Activated CD4-positive, alpha-beta T cell treated with anti-CD3 and anti-CD28 coated beads for 36 hours (primary cell): ENCODE measurements at regions of chr5 and their contacts with region 1.

Region 1: DNA sequence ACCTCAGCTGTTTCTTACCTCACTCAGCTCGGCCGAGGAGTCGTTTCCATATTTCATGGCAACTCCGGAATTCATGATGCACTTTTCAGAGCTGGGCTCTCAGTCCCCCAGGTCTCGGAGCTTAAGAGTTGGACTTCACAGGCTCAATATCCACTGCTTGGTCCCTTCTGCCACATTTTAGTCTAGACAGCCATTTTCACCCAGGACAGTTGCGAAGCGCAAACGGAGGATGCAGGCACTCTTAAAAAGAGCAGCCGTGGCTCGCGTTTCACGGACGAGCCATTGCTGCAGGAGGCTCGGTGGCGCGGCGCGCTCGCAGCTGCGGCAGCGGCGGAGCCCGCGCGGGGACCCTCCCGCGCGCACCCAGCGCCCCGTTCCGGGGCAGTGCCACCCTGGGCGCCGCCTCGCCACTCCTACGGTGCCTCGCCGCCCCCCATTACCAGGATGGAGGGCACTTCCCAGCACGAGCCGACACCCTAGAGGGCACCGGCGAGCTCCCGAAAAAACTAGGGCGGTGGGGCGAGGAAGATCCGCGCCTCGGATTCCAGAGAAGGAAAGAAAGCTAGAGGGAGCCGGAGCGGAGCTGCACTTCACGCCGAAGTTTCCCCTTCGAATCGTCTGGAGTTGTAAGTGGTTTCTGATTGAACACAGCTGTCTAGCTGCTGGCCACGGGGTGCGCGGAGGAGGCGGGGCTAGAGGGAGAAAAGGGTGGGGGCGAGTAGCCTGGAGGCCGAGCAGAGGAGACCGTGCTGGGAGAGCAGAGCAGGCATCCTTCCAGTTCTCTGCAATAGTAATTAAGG is 140.3 kb downstream of the TSSK1B start:
- DNase-seq: peak; percentile 89
- ATAC-seq: peak; percentile 96
- H3K4me3 Mint-ChIP-seq: peak overlapping the region; percentile 78
- H3K27ac Mint-ChIP-seq: peak overlapping the region; percentile 61
- H3K4me1 Mint-ChIP-seq: peaks cover 15% of the 10 kb centered on the region
- H3K27me3 Mint-ChIP-seq: peaks cover 38% of the 10 kb centered on the region

Region 2: DNA sequence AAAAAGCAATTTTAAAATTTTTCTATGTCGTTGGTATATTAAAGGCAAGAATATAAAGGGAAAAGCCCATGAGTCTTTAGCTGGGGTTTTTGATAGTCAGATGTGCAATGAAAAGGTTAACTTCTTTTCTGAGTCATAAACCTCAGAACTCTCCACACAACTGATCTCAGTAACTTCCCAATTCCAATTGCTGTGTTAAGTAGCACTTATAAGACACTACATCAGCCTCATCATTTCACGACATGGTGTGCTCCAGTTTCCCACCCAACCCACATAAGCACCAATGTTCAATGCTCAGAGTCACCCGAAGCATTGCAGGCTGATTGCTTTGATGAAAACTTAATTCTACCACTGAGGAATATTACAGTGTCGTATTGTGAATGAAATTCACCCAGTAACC is 15.5 kb before region 1 on chr5:
- CTCF ChIA-PET with region 1: interaction called, 15 read pairs
- POLR2A ChIA-PET with region 1: no interaction called
- intact Hi-C with region 1: no loop called
- DNase-seq: peak; percentile 34
- ATAC-seq: peak; percentile 93
- H3K4me3 Mint-ChIP-seq: no peak overlapping the region
- H3K27ac Mint-ChIP-seq: no peak overlapping the region
- H3K4me1 Mint-ChIP-seq: peaks cover 17% of the 10 kb centered on the region
- H3K27me3 Mint-ChIP-seq: no peaks in the 10 kb centered on the region